Sciatic nerve (tissue), 2 donors: ENCODE measurements at regions of chr19 and their contacts with region 1.

Region 1: GRCh38 chr19:4909897-4910593 is 744 bp downstream of the UHRF1 start:
- DNase-seq: peak; percentile 95
- ATAC-seq: peak; percentile 89

Region 2: GRCh38 chr19:4815426-4816201 is 94.4 kb before region 1 on chr19:
- intact Hi-C with region 1: loop called (anchors 10 kb)
- DNase-seq: peak; percentile 92
- ATAC-seq: peak; percentile 98

Region 3: DNA sequence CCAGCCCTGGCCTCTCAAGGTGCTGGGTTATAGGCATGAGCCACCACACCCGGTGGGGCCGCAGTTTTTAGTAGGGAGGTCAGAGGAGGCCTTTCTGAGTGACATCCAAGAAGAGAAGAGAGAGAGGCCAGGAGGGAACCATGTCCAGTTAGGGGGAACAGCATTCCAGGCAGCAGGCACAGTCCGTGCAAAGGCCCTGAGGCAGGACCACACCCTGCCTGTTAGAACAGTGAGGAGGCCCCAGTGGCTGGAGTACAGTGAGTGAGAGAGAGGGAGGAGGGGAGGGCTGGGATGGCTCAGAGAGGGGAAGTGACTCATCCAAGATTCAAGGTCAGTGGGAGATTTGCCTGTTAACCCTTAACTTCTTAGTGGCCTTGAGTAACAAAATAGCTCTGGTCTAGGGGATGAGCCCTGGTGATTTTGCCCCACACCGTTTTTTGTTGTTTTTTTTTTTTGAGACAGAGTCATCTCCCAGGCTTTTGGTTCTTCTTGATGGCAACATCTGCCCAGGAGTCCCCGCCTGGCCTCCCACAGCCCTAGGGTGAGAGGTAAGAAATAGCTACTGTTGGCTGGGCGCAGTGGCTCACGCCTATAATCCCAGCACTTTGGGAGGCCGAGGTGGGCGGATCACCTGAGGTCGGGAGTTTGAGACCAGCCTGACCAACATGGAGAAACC is 39.9 kb before region 1 on chr19:
- intact Hi-C with region 1: loop called (anchors 5 kb)
- DNase-seq: no peak
- ATAC-seq: no peak